ENCODE measurements at regions of chr2 and their contacts with region 1.

Region 1: DNA sequence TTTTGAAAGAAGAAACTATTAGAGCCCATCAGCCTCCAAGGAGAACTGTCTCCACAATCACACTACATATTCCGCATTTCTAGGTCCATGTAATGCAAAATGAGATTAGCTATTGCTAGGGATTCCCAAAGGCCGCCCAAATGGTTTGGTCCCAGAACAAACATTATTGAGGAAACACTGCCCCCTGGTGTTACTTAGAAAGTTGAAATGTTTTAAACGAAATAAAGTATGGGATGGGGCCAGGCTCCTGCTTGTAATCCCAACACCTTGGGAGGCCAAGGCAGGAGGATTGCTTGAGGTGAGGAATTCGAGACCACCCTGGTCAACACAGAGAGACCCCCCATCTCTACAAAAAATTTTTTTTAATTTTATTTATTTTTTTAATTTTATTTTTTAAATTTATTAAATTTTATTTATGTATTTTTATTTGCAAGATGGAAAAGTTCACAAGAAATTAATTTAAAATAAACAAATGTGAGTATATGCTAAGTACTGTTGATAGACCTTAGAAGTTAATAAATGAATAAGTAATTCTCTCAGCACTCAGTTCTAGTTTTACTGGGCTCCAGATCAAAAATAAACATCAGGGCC is 5.5 kb downstream of the NHEJ1 start:
- DNase-seq: peak; percentile 89
- ATAC-seq: peak; percentile 44
- H3K4me3 ChIP-seq: no peak overlapping the region
- H3K27ac ChIP-seq: no peak overlapping the region
- H3K4me1 ChIP-seq: peaks cover 19% of the 10 kb centered on the region
- H3K27me3 ChIP-seq: no peaks in the 10 kb centered on the region
- CTCF ChIP-seq: peak; percentile 65

Region 2: GRCh38 chr2:219125225-219125885 is 29.8 kb before region 1 on chr2:
- CTCF ChIA-PET with region 1: interaction called, 6 read pairs
- POLR2A ChIA-PET with region 1: interaction called, 3 read pairs
- intact Hi-C with region 1: loop called (anchors 2 kb)
- DNase-seq: peak; percentile 94
- ATAC-seq: peak; percentile 77
- H3K4me3 ChIP-seq: peak overlapping the region; percentile 33; the same call in 1 of the 2 replicates
- H3K27ac ChIP-seq: peak overlapping the region; percentile 76
- H3K4me1 ChIP-seq: peaks cover 61% of the 10 kb centered on the region
- H3K27me3 ChIP-seq: no peaks in the 10 kb centered on the region
- CTCF ChIP-seq: no peak

Region 3: DNA sequence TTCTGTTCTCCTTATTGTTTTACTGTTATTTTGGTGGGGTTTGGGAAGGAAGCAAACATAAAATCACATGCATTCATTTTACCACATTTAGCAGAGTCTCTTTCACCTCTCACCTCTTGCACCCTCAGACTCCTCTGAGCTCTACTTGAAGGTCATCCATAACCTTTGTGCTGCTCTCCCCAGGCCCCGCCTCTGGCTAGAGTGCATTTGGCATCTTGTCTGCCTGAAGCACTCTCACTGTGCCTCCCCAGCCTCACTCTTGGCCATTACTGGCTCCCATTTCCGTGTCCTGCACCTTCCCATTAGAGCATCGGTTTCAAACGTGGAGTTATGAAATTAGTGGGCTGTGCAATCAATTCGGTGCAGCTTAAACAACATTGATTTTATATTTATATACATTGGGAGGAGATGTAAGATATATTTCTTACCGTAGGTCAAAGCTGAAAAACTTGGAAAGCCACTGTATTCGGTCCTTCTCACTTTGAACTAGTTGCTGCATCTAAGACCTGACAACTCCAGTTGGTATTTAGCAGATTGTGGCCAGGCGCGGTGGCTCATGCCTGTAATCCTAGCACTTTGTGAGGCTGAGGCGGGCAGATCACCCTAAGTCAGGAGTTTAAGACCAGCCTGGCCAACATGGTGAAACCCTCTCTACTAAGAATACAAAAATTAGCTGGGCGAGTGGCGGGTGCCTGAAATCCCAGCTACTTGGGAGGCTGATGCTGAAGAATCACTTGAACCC is 44.5 kb after region 1 on chr2:
- CTCF ChIA-PET with region 1: no interaction called
- POLR2A ChIA-PET with region 1: no interaction called
- intact Hi-C with region 1: no loop called
- DNase-seq: peak; percentile 0
- ATAC-seq: no peak
- H3K4me3 ChIP-seq: no peak overlapping the region
- H3K27ac ChIP-seq: no peak overlapping the region
- H3K4me1 ChIP-seq: no peaks in the 10 kb centered on the region
- H3K27me3 ChIP-seq: no peaks in the 10 kb centered on the region
- CTCF ChIP-seq: no peak

Region 4: GRCh38 chr2:219530048-219530963 is 375.2 kb after region 1 on chr2:
- CTCF ChIA-PET with region 1: no interaction called
- POLR2A ChIA-PET with region 1: no interaction called
- intact Hi-C with region 1: no loop called
- DNase-seq: peak; percentile 91
- ATAC-seq: peak; percentile 91
- H3K4me3 ChIP-seq: peak overlapping the region; percentile 57; the same call in 1 of the 2 replicates
- H3K27ac ChIP-seq: no peak overlapping the region
- H3K4me1 ChIP-seq: no peaks in the 10 kb centered on the region
- H3K27me3 ChIP-seq: peaks cover 10% of the 10 kb centered on the region
- CTCF ChIP-seq: peak; percentile 96